ENCODE measurements at regions of chr9 and their contacts with region 1.

Region 1: GRCh38 chr9:132944302-132945185 is at the start of gene TSC1:
- DNase-seq: peak; percentile 99
- ATAC-seq: peak; percentile 91
- H3K4me3 Mint-ChIP-seq: peak within 1 kb of the TSS; percentile 81
- H3K27ac Mint-ChIP-seq: peak within 1 kb of the TSS; percentile 99
- H3K4me1 Mint-ChIP-seq: peaks cover 31% of the 10 kb centered on the region
- H3K27me3 Mint-ChIP-seq: no peaks in the 10 kb centered on the region
- total RNA-seq, gene TSC1: 23.9 to 28.6 TPM

Region 2: DNA sequence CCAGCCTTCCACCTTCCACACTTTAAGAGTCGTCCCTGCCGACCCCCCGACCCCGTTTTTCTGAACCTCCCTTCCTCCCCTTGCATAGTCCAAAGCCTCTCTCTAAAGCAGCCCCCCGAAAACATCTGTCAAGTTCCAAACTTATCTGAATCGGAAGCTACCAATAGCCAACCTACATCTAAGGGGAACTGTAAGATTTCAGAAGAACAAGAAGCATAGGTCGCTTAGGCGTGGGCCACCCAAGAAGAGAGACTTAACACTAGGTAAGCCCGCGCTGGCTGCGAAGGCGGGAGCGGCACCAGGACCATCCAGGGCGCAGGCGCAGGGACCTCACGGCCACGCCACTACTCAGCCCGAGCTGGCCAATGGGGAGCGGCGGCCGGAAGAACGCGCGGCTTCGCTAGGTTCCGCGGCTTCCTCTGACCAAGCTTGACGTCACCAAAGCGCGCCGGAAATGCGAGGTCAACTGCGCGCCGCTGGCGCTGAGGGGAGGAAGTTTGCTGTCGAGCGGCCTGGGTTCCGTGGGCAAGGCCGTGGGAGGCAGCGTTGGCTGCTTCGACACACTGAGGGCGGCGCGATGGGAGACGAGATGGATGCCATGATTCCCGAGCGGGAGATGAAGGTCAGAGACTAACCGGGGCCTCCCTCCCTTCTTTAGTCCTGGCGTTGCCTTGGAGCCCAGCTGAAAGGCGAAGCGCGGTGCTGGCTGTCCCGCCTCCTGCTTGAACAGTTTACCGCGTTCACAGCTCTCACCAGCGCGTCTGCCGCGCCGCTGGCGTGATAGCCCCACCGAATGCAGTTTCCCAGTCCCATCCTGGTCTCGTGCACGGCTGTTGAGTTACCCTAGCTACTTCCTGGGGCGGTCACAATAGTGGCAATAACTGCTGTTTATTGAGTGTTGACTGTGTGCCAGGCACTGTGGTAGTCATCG is 1819.2 kb before region 1 on chr9 and contains the start of gene NUP214:
- CTCF ChIA-PET with region 1: no interaction called
- POLR2A ChIA-PET with region 1: no interaction called
- intact Hi-C with region 1: loop called in 1 of 2 experiments (anchors 5 kb)
- DNase-seq: peak; percentile 100
- ATAC-seq: peak; percentile 100
- H3K4me3 Mint-ChIP-seq: peak within 1 kb of the TSS; percentile 94
- H3K27ac Mint-ChIP-seq: peak within 1 kb of the TSS; percentile 92
- H3K4me1 Mint-ChIP-seq: peaks cover 31% of the 10 kb centered on the region
- H3K27me3 Mint-ChIP-seq: no peaks in the 10 kb centered on the region
- total RNA-seq, gene NUP214: 61.4 to 97.7 TPM

Region 3: DNA sequence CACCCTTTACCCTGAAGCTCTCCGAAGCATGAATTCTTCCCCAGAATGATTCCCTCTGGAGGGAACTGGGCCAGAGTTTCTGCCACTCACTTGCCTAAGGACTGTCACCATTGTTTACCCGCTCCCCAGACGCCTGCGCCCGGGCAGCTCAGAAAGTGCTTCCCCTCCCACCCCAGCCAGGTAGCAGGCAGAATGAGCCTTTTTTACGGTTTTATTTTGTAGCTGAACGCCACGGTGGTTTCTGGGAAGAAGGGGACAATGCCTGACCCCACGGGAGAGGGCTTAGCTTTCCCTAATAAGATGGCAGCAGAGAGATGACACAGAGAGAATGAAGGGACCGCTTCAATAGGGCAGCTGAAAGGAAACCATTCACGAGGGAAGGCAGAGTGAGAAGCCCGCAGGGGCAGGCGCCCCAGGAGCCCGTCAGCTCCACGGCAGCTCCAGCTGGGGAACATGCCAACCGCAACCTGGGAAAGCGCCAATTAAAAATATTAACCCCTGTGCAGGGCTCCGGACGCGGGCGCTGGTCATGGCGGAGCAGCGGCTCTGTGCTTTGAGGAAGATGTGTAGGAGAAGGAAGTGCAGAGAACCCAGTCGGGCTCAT is 803.1 kb before region 1 on chr9:
- CTCF ChIA-PET with region 1: no interaction called
- POLR2A ChIA-PET with region 1: no interaction called
- intact Hi-C with region 1: no loop called
- DNase-seq: no peak
- ATAC-seq: no peak
- H3K4me3 Mint-ChIP-seq: peak overlapping the region; percentile 40
- H3K27ac Mint-ChIP-seq: no peak overlapping the region
- H3K4me1 Mint-ChIP-seq: peaks cover 14% of the 10 kb centered on the region
- H3K27me3 Mint-ChIP-seq: peaks cover 58% of the 10 kb centered on the region

Region 4: GRCh38 chr9:132669698-132670456 is 274.7 kb before region 1 on chr9 and contains the start of gene DDX31:
- CTCF ChIA-PET with region 1: no interaction called
- POLR2A ChIA-PET with region 1: no interaction called
- intact Hi-C with region 1: loop called in 1 of 2 experiments (anchors 1 kb)
- DNase-seq: peak; percentile 91
- ATAC-seq: peak; percentile 86
- H3K4me3 Mint-ChIP-seq: peak within 1 kb of the TSS; percentile 89
- H3K27ac Mint-ChIP-seq: peak within 1 kb of the TSS; percentile 90
- H3K4me1 Mint-ChIP-seq: peaks cover 49% of the 10 kb centered on the region
- H3K27me3 Mint-ChIP-seq: no peaks in the 10 kb centered on the region
- total RNA-seq, gene DDX31: 20.9 to 21.0 TPM

Region 5: GRCh38 chr9:132717326-132717945 is 227.1 kb before region 1 on chr9:
- CTCF ChIA-PET with region 1: no interaction called
- POLR2A ChIA-PET with region 1: no interaction called
- intact Hi-C with region 1: no loop called
- DNase-seq: no peak
- ATAC-seq: no peak
- H3K4me3 Mint-ChIP-seq: no peak overlapping the region
- H3K27ac Mint-ChIP-seq: no peak overlapping the region
- H3K4me1 Mint-ChIP-seq: no peaks in the 10 kb centered on the region
- H3K27me3 Mint-ChIP-seq: peaks cover 11% of the 10 kb centered on the region

Region 6: DNA sequence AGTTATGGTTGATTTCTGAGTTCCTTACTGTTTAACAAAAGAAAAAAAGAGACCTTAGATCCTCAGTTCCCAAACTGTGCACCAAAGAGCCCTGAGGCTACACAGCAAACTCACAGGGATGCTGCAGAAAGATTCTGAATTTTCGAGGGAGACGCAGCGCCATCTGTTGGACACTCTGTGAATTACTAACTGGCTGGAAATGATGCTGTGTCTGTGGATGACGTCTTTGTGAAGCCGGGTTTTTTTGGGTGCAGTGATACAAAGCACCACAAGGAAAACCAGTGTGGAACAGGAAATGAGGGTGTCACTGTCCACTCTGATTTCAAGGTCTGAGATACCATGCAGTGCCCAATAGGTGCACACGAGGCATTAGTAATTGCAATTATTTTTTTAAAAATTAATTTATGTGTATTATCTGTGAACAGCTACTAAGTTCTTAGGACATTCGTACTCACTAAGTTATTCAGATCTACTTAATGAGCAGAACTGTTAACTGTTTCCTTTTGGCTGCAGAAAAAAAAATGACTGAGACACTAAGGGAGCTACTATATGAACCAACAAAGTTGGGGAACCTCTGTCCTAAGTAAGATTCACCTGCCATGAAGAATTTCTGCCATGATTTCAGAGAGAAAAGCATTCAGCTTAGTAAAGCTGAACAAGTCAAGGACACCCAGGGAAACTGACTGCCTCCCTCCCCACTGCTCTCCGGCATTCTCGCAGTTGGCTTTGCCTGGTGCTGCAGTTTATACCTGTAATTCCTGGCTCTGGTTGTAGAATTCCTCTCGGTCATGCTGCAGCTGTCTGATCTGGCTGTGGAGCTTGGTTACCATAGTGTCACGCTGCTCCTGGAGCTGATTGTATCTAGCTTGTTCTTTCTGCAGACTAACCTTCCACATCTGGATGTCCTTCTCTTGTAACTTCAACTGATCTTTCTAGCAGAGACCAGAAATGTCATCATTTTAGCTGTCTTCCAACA is 42.4 kb before region 1 on chr9:
- CTCF ChIA-PET with region 1: interaction called, 5 read pairs
- POLR2A ChIA-PET with region 1: no interaction called
- intact Hi-C with region 1: loop called in 1 of 2 experiments (anchors 1 kb)
- DNase-seq: peak; percentile 87
- ATAC-seq: peak; percentile 99
- H3K4me3 Mint-ChIP-seq: no peak overlapping the region
- H3K27ac Mint-ChIP-seq: no peak overlapping the region
- H3K4me1 Mint-ChIP-seq: peaks cover 8% of the 10 kb centered on the region
- H3K27me3 Mint-ChIP-seq: no peaks in the 10 kb centered on the region

Region 7: DNA sequence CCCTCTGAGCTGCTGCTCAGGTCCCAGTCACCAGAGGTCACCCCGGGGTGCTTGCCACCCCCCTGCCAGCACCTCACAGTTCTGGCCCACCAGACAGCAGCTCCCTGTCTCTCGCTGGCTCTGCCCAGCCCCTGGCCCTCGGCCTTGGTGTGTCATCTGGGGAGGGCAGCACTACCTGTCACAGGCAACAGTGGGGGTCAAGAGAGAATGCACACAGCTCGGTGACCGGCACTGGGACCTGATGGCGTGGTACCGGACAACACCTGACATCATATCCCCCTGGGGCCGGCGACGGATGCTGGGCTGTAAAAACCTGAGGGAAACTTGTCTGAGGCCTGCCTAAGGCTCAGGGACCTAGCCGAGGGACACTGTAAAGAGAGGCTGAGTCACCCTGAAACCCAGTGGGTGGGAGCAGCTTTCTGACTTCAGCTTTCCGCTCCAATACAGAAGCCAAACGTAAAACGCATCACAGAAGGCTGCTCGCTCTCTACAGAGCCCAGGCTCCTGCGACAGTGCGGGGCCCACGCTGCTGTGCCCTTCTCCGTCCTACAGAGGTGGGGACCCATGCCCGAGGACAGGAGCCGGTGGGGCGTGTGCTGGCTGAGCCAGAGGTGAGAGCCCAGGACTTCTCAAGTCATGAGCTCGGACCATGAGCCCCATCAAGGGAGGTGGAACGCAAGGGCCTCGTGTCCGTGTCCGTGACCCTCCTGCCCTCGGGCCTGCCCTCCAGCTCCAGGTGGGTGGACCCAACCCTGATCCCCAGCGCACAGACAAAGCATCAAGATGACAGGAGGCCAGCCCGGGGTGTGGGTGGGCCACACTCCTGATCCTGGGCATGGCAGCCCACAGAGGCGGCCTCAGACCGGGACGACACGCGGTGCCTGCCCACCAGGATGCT is 171.2 kb after region 1 on chr9:
- CTCF ChIA-PET with region 1: no interaction called
- POLR2A ChIA-PET with region 1: no interaction called
- intact Hi-C with region 1: loop called in 1 of 2 experiments (anchors 1 kb)
- DNase-seq: peak; percentile 89
- ATAC-seq: peak; percentile 94
- H3K4me3 Mint-ChIP-seq: peak overlapping the region; percentile 50
- H3K27ac Mint-ChIP-seq: peak overlapping the region; percentile 84
- H3K4me1 Mint-ChIP-seq: peaks cover 57% of the 10 kb centered on the region
- H3K27me3 Mint-ChIP-seq: no peaks in the 10 kb centered on the region

Region 8: DNA sequence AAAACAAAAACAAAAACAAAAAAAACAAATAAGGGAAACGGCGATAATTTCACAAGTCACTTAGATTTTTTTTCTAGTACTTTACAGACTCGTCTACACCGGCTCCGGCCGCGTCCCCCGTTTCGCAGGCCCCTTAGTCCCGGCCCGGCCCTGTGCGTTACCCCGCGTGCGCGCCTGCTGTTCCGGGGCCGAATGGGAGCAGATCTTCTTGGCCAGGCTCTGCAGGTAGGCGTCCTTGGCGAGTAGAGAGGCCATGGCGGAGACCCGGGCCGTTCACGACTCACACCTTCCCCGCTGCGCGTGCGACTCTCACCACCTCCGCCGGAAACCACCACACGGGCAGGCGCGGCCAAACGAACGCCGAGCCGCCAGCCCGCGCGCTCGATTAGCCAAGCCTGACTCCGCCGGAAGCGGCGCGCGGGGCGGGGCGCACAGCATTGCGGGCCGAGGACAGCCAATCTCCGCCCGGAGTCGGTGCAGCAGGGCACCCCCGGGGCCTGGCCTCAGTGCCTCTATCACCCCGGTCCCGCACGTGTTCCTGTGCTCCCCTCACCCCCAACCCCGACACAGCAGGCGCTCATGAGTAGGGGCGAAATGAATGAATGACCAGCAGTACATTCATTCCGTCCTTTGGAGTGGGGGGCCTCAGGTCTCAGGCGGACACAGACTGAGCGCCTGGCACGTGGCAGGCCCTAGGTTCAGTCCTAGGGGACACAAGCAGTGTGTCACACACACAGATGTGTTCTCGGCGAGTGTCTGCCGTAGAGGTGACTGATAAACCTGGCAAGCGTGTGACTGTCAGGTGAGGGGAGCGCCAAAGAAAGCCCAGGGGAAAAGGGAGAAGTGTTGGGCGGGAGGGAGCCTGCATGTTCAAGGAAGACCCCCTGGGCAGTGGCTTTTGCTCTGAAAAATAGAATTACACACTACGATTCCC is 391.6 kb after region 1 on chr9 and contains the start of gene SURF6:
- CTCF ChIA-PET with region 1: no interaction called
- POLR2A ChIA-PET with region 1: no interaction called
- intact Hi-C with region 1: loop called in 1 of 2 experiments (anchors 1 kb)
- DNase-seq: peak; percentile 97
- ATAC-seq: peak; percentile 96
- H3K4me3 Mint-ChIP-seq: peak within 1 kb of the TSS; percentile 86
- H3K27ac Mint-ChIP-seq: peak within 1 kb of the TSS; percentile 89
- H3K4me1 Mint-ChIP-seq: peaks cover 23% of the 10 kb centered on the region
- H3K27me3 Mint-ChIP-seq: no peaks in the 10 kb centered on the region
- total RNA-seq, gene SURF6: 22.4 to 24.3 TPM

Measured in activated CD4-positive, alpha-beta T cell treated with anti-CD3 and anti-CD28 coated beads for 36 hours (primary cell).